T-cell (primary cell): ENCODE measurements at regions of chr6 and their contacts with region 1.

Region 1: GRCh38 chr6:42452171-42453030 is 675 bp upstream of the TRERF1 start:
- DNase-seq: peak in 33 of 35 experiments; percentile 22 to 73 (median 46)
- ATAC-seq: peak; percentile 41 to 50 (median 48)
- H3K4me3 ChIP-seq: peak overlapping the region; percentile 66 to 87
- H3K4me3 Mint-ChIP-seq: peak overlapping the region; percentile 89 to 99 (median 93)
- H3K27ac ChIP-seq: peak overlapping the region; percentile 67
- H3K27ac Mint-ChIP-seq: peak overlapping the region; percentile 95 to 96
- H3K4me1 ChIP-seq: peaks cover 18 to 31% of the 10 kb centered on the region in 2 experiments
- H3K4me1 Mint-ChIP-seq: peaks cover 40 to 50% (median 42%) of the 10 kb centered on the region in 3 donors
- H3K27me3 ChIP-seq: no peaks in the 10 kb centered on the region
- H3K27me3 Mint-ChIP-seq: no peaks in the 10 kb centered on the region

Region 2: DNA sequence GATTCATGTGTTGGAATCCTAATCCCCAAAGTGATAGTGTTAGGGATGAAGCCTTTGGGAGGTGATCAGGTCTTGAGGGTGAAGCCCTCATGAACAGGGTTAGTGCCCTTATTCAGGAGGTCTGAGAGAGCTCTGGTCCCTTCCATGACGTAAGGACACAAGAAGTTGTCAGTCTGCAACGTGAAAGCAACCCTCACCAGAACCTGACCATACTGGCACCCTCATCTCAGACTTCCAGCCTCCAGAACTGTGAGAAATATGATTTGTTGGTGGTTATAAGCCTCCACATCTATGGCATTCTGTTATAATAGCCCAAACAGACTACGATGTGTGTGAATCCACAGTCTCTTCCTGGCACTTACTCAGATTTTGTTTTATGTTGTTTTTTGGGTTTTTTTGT is 91.4 kb before region 1 on chr6:
- CTCF ChIA-PET with region 1: no interaction called
- POLR2A ChIA-PET with region 1: interaction called, 4 to 11 read pairs
- DNase-seq: no peak
- ATAC-seq: no peak
- H3K4me3 ChIP-seq: no peak overlapping the region
- H3K4me3 Mint-ChIP-seq: peak overlapping the region in 1 of 3 donors; percentile 6
- H3K27ac ChIP-seq: no peak overlapping the region
- H3K27ac Mint-ChIP-seq: no peak overlapping the region
- H3K4me1 ChIP-seq: peaks cover 6 to 37% of the 10 kb centered on the region in 2 experiments
- H3K4me1 Mint-ChIP-seq: peaks cover 36 to 48% (median 40%) of the 10 kb centered on the region in 3 donors
- H3K27me3 ChIP-seq: no peaks in the 10 kb centered on the region
- H3K27me3 Mint-ChIP-seq: no peaks in the 10 kb centered on the region

Region 3: DNA sequence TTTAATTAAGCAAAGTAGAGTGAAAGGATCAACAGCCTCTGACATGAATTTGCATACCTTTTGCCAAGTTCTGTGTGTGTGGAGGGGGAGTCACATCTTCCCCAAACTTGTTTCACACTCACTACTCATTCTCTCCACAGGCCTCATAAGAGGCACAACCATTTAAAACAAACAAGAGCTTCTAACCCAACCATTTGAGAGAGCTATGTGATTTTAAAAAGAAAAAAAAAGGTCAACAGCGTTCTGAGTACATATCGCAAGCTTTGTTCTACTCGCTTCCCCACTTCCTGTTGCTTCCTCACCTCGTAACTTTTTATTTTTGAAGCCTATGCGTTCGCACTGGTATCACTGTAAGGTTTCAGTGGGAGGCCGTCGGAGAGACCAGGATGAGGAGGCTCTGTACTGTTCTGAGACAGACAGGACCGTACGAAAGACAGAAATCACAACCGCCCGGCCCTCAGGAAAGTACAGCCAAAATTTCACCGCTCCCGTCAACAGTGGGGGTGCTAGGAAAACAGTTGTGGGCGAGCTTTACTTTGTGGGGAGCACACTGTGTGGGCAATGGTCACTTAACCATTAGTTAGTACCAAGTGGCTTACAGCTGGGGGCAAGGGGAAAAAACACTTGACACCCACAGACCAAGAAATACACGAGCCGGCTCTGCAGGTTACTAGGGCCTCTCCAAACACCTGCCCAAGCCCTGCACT is 62.0 kb before region 1 on chr6:
- CTCF ChIA-PET with region 1: interaction called, 7 to 13 read pairs
- POLR2A ChIA-PET with region 1: interaction called, 4 to 8 read pairs
- DNase-seq: peak; percentile 40 to 87 (median 62)
- ATAC-seq: peak; percentile 81 to 86 (median 84)
- H3K4me3 ChIP-seq: peak overlapping the region; percentile 12 to 35
- H3K4me3 Mint-ChIP-seq: peak overlapping the region; percentile 48 to 76 (median 65)
- H3K27ac ChIP-seq: peak overlapping the region; percentile 90
- H3K27ac Mint-ChIP-seq: peak overlapping the region; percentile 99 to 100
- H3K4me1 ChIP-seq: peaks cover 75 to 86% of the 10 kb centered on the region in 2 experiments
- H3K4me1 Mint-ChIP-seq: peaks cover 97 to 100% (median 99%) of the 10 kb centered on the region in 3 donors
- H3K27me3 ChIP-seq: no peaks in the 10 kb centered on the region
- H3K27me3 Mint-ChIP-seq: no peaks in the 10 kb centered on the region

Region 4: GRCh38 chr6:42431877-42432276 is 20.5 kb before region 1 on chr6:
- CTCF ChIA-PET with region 1: interaction called in 1 of 2 experiments, 10 read pairs
- POLR2A ChIA-PET with region 1: interaction called in 1 of 2 experiments, 7 read pairs
- DNase-seq: no peak
- ATAC-seq: no peak
- H3K4me3 ChIP-seq: no peak overlapping the region
- H3K4me3 Mint-ChIP-seq: no peak overlapping the region
- H3K27ac ChIP-seq: no peak overlapping the region
- H3K27ac Mint-ChIP-seq: peak overlapping the region; percentile 52 to 68
- H3K4me1 ChIP-seq: peaks cover 8 to 28% of the 10 kb centered on the region in 2 experiments
- H3K4me1 Mint-ChIP-seq: peaks cover 37 to 51% (median 44%) of the 10 kb centered on the region in 3 donors
- H3K27me3 ChIP-seq: no peaks in the 10 kb centered on the region
- H3K27me3 Mint-ChIP-seq: no peaks in the 10 kb centered on the region

Region 5: DNA sequence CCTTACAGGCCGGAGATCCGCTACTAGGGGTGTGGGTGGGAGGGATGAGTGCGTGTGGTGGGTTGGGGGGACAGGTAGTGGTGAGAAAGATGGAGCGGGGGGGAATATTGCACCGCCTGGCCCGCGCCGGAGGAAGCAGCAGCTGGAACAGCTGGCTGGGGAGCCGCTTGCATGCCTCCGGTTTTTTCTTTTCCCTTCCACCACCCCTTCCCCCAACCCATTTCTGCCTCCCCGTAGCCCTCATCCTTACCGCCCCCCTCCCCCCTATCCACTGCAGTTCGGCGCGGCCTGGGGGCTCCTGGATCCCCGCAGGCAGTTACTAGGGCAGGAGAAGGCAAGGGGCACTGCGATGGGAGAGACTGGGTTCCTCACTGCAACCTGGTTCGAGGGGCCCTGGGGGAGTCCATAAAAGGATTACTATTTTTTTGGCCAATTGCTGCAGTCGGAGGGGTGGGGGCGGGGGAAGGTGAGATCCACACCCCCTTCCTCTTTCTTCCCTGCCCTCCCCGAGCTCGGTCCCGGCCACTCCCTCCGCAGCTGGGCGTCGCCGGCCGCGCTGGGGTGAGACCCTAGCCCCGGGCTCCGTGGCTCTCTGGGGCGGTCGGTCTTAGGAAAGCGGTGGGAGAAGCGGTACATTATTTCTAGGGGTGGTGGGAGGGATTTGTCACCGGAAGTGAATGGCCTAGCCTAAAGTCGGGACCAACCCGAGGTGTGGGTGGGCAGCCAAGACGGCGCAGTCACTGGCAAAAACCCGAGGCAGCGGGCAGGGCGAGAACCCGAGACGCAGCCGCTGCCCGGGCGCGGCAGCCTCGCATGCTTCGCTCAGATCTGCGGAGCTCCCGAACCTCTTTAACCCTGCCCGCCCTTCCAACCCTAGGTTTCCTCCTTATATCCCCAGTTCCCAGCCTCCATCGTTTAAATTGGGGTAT is 294.3 kb after region 1 on chr6:
- CTCF ChIA-PET with region 1: no interaction called
- POLR2A ChIA-PET with region 1: no interaction called
- DNase-seq: peak; percentile 53 to 85 (median 68)
- ATAC-seq: peak; percentile 51 to 63 (median 56)
- H3K4me3 ChIP-seq: peak overlapping the region; percentile 57 to 100
- H3K4me3 Mint-ChIP-seq: peak overlapping the region; percentile 89 to 100 (median 100)
- H3K27ac ChIP-seq: peak overlapping the region; percentile 92
- H3K27ac Mint-ChIP-seq: peak overlapping the region; percentile 95 to 97
- H3K4me1 ChIP-seq: peaks cover 12 to 49% of the 10 kb centered on the region in 2 experiments
- H3K4me1 Mint-ChIP-seq: peaks cover 27 to 41% (median 37%) of the 10 kb centered on the region in 3 donors
- H3K27me3 ChIP-seq: peaks cover 0 to 2% of the 10 kb centered on the region in 2 experiments
- H3K27me3 Mint-ChIP-seq: no peaks in the 10 kb centered on the region